H1 (cell line): ENCODE measurements at regions of chr19 and their contacts with region 1.

Region 1: DNA sequence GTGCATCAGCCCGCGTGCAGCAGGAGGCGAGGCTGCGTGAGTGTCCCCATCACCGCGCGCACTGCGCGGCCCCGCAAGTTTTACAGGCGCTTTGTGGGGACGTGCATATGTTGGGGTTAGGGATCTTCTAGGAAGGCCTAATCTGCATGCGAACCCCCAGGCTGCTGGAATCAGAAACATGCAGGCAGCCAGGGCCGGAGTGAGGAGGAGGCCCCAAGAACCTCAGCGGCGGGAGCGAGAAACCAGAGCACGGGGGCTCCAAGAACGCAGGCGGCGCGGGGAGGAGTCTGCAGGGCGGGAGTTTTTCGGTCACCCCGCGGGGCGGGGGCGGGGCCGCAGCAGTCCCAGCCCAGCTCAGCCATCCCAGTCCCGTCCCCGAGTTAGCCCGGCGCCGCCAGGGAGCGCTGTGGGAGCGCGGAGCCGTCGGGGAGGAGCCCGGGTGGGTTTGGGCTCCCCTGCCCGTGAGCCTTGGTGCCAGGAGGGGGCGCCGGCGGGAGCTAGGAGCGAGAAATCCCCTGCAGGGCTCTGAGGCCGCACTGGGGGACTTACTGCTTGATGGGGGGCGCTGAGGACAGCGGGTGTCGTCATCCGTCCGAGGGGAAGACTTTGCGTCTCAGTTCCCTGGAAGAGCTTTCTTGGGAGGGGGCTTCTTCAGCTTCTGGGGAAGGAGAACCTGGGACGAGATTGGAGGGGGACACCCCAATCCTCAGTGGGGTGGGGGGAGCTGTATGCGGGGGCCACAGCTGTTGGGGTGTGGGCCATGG is 933 bp upstream of the NRTN start:
- DNase-seq: peak; percentile 88 to 100
- H3K4me3 ChIP-seq: peak overlapping the region; percentile 2 to 57 (median 15); a peak in 6 of 8 replicates
- H3K27ac ChIP-seq: no peak overlapping the region
- H3K4me1 ChIP-seq: peaks cover 0 to 18% (median 10%) of the 10 kb centered on the region in 4 experiments; a peak in 5 of 7 replicates
- H3K27me3 ChIP-seq: peaks cover 2 to 16% (median 8%) of the 10 kb centered on the region in 4 experiments; a peak in 6 of 7 replicates
- CTCF ChIP-seq: peak; percentile 93 to 99 (median 94)
- EP300 ChIP-seq: 0 out of 3 replicates have a peak, but pooled peaks of 1 of the 2 experiments have one; percentile 8
- POLR2A ChIP-seq: no peak
- RAD21 ChIP-seq: peak; percentile 88 to 93

Region 2: GRCh38 chr19:5676105-5676771 is 127.7 kb before region 1 on chr19:
- CTCF ChIA-PET with region 1: no interaction called
- POLR2A ChIA-PET with region 1: no interaction called
- DNase-seq: no peak
- H3K4me3 ChIP-seq: no peak overlapping the region
- H3K27ac ChIP-seq: no peak overlapping the region
- H3K4me1 ChIP-seq: peaks cover 0 to 8% (median 2%) of the 10 kb centered on the region in 4 experiments; a peak in 5 of 7 replicates
- H3K27me3 ChIP-seq: no peaks in the 10 kb centered on the region
- CTCF ChIP-seq: no peak
- EP300 ChIP-seq: no peak
- POLR2A ChIP-seq: no peak
- RAD21 ChIP-seq: no peak

Region 3: GRCh38 chr19:5743630-5744029 is 60.3 kb before region 1 on chr19:
- CTCF ChIA-PET with region 1: no interaction called
- POLR2A ChIA-PET with region 1: no interaction called
- DNase-seq: no peak
- H3K4me3 ChIP-seq: no peak overlapping the region
- H3K27ac ChIP-seq: no peak overlapping the region
- H3K4me1 ChIP-seq: no peaks in the 10 kb centered on the region
- H3K27me3 ChIP-seq: no peaks in the 10 kb centered on the region
- CTCF ChIP-seq: no peak
- EP300 ChIP-seq: no peak
- POLR2A ChIP-seq: no peak
- RAD21 ChIP-seq: no peak

Region 4: DNA sequence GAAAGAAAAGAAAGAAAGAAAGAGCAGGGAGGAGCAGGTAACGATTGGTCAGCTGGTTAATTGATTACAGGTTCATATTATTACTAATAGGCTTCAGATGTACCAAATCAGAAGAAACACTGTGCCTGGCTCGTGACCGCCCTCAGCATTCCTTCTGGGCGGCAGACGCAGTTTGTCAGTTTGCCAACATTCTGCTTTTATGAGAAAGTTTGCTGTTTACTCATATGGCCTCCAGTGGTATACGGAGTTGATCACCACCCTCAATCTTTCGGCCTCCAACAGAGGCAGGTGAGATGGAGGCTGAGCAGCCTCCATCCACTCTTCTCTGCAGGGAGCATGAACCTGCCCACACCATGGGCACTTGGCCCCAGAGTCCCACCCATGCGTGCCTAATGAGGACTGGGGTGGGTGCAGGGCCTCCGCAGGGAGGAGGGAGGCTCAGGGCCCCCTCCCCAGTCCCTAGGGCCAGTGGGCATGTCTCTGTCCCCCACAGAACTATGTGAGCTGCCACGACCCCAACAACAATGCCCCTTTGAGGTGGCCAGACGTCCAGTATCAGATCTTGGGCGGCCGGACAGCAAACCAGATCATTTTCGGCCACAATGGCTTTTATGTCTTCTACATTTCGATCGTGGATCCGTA is 28.1 kb before region 1 on chr19:
- CTCF ChIA-PET with region 1: interaction called, 19 read pairs
- POLR2A ChIA-PET with region 1: no interaction called
- DNase-seq: no peak
- H3K4me3 ChIP-seq: no peak overlapping the region
- H3K27ac ChIP-seq: no peak overlapping the region
- H3K4me1 ChIP-seq: no peaks in the 10 kb centered on the region
- H3K27me3 ChIP-seq: no peaks in the 10 kb centered on the region; a peak in 2 of 7 replicates
- CTCF ChIP-seq: no peak
- EP300 ChIP-seq: no peak
- POLR2A ChIP-seq: no peak
- RAD21 ChIP-seq: no peak

Region 5: DNA sequence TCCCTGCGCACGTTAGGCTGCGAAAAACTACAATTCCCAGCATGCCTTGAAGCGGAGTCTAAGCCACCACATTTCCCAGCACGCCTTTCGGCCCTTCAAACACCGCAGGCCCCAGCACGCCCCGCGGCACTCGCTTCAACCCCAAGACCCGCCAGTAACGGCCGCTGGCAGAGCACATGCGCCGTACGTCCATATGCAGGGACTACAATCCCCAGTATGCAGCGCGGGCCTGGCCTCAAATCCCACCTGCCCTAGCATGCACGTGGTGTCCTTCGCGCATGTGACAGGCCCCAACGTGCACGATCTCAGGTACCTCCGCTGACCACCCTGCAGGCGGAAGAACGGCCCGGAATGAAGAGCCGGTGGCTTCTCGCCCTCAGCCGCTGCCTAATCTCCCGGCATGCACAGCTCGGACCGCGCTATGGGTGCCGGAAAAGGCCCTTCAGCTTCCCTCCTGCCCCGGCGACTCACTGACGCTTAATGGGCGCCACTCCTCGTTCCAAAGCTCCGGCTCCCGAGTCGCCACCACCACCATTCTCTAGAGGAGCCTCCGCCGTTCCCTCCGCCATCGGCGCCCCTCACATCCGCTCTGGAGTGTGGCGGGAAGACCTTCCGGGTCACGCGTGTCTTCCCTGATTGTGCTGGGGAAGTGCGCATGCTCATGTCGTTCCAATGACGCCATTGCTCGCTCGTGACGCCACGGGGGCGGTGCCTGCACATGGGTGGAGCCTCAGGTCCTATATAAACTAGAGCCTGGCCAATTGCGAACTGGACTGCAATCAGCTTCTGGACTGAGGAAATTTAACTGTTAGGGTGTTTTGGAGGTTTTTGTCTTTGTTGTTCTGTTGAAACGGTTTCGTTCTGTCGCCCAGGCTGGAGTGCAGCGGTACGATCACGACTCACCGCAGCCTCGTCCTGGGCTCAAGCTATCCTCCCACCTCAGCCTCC is 13.1 kb before region 1 on chr19 and contains the start of gene DUS3L:
- CTCF ChIA-PET with region 1: interaction called, 13 read pairs
- POLR2A ChIA-PET with region 1: interaction called, 7 read pairs
- DNase-seq: peak; percentile 94 to 95
- H3K4me3 ChIP-seq: peak within 1 kb of the TSS; percentile 77 to 92 (median 82)
- H3K27ac ChIP-seq: peak within 1 kb of the TSS; percentile 91
- H3K4me1 ChIP-seq: no peaks in the 10 kb centered on the region; a peak in 1 of 7 replicates
- H3K27me3 ChIP-seq: no peaks in the 10 kb centered on the region
- CTCF ChIP-seq: no peak
- EP300 ChIP-seq: no peak
- POLR2A ChIP-seq: peak in 1 of 2 experiments; percentile 87; a peak in 2 of 3 replicates
- RAD21 ChIP-seq: no peak
- total RNA-seq, gene DUS3L: 39.1 and 39.4 TPM in 2 replicates

Region 6: GRCh38 chr19:5891938-5892771 is 88.2 kb after region 1 on chr19:
- CTCF ChIA-PET with region 1: interaction called, 31 read pairs
- POLR2A ChIA-PET with region 1: interaction called, 35 read pairs
- DNase-seq: peak in 1 of 2 experiments; percentile 70
- H3K4me3 ChIP-seq: no peak overlapping the region
- H3K27ac ChIP-seq: no peak overlapping the region
- H3K4me1 ChIP-seq: peaks cover 0 to 11% (median 4%) of the 10 kb centered on the region in 4 experiments; a peak in 5 of 7 replicates
- H3K27me3 ChIP-seq: peaks cover 0 to 1% (median 0%) of the 10 kb centered on the region in 4 experiments; a peak in 3 of 7 replicates
- CTCF ChIP-seq: peak; percentile 72 to 80 (median 75)
- EP300 ChIP-seq: no peak
- POLR2A ChIP-seq: peak in 1 of 2 experiments; percentile 56; a peak in 1 of 3 replicates
- RAD21 ChIP-seq: peak; percentile 78 to 79

Region 7: DNA sequence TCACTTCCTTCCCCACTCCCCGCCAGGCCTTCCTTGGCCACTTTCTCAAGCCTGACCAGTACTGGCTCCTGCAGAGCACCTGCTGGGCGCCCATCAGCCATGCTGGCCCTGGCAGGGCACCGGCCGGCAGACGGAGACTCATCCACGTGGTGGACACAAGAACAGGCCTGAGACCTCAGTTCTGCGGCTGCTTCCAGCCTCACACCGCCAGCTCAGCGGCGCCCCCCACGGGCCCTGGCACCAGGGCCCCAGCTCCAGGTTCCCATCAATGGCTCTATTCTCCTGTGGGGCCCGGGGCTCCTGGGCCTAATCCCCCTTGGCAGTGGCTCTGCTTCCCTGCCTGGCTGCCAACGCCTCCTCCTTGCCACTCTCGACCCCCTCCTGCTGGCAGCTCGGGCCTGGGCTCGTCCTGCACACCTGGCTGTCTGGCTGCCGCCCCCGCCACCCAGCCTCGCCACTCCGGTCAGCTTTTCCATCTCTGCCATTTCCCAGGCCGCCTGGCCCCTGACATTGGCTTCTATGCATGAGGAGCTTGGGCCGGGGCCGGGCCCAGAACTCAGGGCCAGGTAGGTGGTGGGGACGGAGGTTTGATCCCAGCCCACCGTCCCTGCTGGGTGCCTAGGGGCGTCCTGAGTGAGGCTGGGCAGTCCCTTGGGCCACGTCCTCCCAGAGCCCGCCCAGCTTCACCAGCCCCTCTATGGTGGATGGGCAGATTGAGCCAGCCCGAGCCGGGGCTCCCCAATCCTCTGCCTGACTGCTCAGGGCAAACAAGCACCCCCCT is 93.4 kb after region 1 on chr19:
- CTCF ChIA-PET with region 1: interaction called, 43 read pairs
- POLR2A ChIA-PET with region 1: interaction called, 35 read pairs
- DNase-seq: peak in 1 of 2 experiments; percentile 66
- H3K4me3 ChIP-seq: no peak overlapping the region
- H3K27ac ChIP-seq: no peak overlapping the region; the same call in 1 of the 2 replicates
- H3K4me1 ChIP-seq: peaks cover 0 to 2% (median under 1%) of the 10 kb centered on the region in 4 experiments; a peak in 4 of 7 replicates
- H3K27me3 ChIP-seq: peaks cover 0 to 1% (median 0%) of the 10 kb centered on the region in 4 experiments; a peak in 2 of 7 replicates
- CTCF ChIP-seq: peak; percentile 53 to 62 (median 62)
- EP300 ChIP-seq: no peak
- POLR2A ChIP-seq: no peak
- RAD21 ChIP-seq: peak; percentile 43 to 57

Region 8: DNA sequence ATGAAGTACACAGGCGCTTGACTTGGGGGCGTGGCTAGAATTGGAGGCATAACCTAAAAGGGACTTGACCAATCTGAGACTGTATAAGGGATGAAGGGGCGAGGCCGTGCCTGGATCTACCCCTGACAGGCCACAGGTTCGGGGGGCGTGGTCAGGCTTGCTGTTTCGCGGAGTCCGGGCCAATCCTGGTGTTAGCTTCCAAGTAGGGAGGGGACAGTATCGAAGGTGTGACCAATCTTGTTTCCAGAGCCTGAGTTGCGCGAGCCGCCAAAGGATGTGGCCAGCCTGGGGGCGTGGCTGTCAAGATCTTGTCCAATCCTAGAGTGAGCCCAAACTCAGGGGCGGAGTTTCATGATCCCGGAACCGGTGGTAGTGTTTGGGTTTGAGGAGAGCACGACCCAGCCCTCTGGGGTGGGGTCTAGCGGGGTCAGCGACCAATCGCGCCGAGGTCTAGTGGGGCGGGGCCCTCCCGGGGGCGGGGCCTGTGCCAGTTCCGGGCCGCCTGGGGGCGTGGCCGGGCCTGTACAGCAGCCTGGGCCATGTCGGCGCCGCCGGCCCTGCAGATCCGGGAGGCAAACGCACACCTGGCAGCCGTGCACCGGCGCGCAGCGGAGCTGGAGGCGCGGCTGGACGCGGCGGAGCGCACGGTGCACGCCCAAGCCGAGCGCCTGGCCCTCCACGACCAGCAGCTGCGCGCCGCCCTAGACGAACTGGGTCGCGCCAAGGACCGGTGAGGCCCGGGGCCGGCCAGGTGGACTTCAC is 100.6 kb after region 1 on chr19 and contains the start of gene VMAC:
- CTCF ChIA-PET with region 1: interaction called, 43 read pairs
- POLR2A ChIA-PET with region 1: interaction called, 10 read pairs
- DNase-seq: peak; percentile 99 to 100
- H3K4me3 ChIP-seq: peak within 1 kb of the TSS; percentile 80 to 99 (median 95)
- H3K27ac ChIP-seq: peak within 1 kb of the TSS; percentile 87
- H3K4me1 ChIP-seq: peaks cover 0 to 5% (median 0%) of the 10 kb centered on the region in 4 experiments; a peak in 4 of 7 replicates
- H3K27me3 ChIP-seq: no peaks in the 10 kb centered on the region
- CTCF ChIP-seq: peak in 1 of 3 experiments; percentile 9; a peak in 1 of 4 replicates
- EP300 ChIP-seq: no peak
- POLR2A ChIP-seq: peak in 1 of 2 experiments; percentile 70; a peak in 2 of 3 replicates
- RAD21 ChIP-seq: no peak
- total RNA-seq, gene VMAC: 1.2 and 1.3 TPM in 2 replicates